Activated CD4-positive, alpha-beta T cell treated with anti-CD3 and anti-CD28 coated beads, Interleukin-2, amount 10 ng/mL, durations not matched to agents 24 days and 14 days (primary cell): ENCODE measurements at regions of chr19 and their contacts with region 1.

Region 1: GRCh38 chr19:21141787-21142464 is at the start of gene ZNF431:
- DNase-seq: peak; percentile 96
- H3K4me3 Mint-ChIP-seq: peak within 1 kb of the TSS; percentile 92
- H3K27ac Mint-ChIP-seq: peak within 1 kb of the TSS; percentile 96
- H3K4me1 Mint-ChIP-seq: peaks cover 22% of the 10 kb centered on the region
- H3K27me3 Mint-ChIP-seq: no peaks in the 10 kb centered on the region
- total RNA-seq, gene ZNF431: 14.2 and 14.8 TPM in 2 replicates

Region 2: DNA sequence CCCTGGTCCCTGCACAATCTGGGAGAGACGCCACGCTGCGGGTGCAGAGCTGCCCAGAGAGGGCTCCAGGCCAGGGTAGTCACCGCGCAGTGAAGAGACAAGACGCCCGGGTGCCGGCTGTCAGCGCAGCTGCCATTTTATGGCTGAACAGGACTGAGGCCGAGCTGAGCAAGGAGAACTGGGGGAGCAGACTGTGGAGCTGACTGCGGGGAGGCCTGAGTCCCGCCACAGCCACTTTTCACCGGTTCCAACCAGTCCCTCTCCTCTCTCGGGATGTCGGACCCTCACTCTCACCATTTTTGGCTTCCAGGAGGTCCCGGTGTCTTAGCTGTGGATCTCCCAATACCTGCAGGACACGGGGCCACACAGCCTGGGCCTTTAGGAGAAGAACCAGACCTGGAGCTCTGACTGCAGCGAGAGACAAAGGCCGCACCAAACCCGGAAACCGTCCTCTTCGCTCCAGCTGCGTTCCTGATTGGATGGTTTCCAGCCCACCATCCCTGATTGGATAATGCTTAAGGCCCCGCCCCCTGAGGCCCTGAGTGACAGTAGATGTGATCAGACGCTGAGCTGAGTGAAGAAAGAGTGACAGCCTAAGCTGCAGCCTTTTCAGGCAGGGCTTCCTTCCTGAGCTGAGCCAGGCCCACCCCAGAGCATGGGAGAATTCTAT is 480.6 kb before region 1 on chr19 and contains the start of gene ZNF626:
- intact Hi-C with region 1: loop called (anchors 10 kb)
- DNase-seq: peak; percentile 92
- H3K4me3 Mint-ChIP-seq: peak within 1 kb of the TSS; percentile 83
- H3K27ac Mint-ChIP-seq: peak within 1 kb of the TSS; percentile 84
- H3K4me1 Mint-ChIP-seq: no peaks in the 10 kb centered on the region
- H3K27me3 Mint-ChIP-seq: no peaks in the 10 kb centered on the region
- total RNA-seq, gene ZNF626: 1.7 and 2.7 TPM in 2 replicates

Region 3: GRCh38 chr19:20776083-20777076 is 365.5 kb before region 1 on chr19 and contains the start of gene ZNF66:
- intact Hi-C with region 1: loop called (anchors 1 kb)
- DNase-seq: peak; percentile 98
- H3K4me3 Mint-ChIP-seq: peak within 1 kb of the TSS; percentile 96
- H3K27ac Mint-ChIP-seq: peak within 1 kb of the TSS; percentile 95
- H3K4me1 Mint-ChIP-seq: peaks cover 4% of the 10 kb centered on the region
- H3K27me3 Mint-ChIP-seq: no peaks in the 10 kb centered on the region
- total RNA-seq, gene ZNF66: 7.9 and 10.7 TPM in 2 replicates

Region 4: DNA sequence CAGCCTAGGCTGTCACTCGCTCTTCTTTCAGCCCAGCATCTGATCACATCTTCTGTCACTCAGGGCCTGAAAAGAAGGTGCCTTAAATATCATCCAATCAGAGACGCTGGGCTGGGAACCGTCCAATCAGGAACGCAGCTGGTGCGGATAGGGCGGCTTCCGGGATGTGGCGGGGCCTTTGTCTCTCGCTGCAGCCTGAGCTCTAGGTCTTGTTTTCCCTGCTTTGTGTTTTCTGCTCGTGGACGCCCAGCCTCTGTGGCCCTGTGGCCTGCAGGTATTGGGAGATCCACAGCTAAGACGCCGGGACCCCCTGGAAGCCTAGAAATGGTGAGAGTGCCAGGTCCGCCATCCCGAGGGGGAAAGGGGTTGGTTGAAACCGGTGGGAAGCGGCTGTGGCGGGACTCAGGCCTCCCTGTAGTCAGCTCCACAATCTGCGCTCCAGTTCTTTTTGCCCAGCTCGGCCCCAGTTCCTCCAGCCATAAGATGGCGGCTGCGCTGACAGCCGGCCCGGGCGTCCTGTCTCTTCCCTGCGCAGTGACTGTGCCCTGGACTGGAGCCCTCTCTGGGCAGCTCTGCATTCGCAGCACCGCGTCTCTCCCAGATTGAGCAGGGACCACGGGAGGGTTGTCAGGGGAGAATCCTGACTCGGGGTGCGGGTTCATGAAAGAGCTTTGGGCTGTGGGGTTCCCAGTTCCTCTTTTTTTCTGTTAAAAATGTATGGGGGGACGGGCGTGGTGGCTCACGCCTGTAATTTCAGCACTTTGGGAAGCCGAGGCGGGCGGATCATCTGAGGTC is 218.7 kb before region 1 on chr19 and contains the start of gene ZNF85:
- intact Hi-C with region 1: loop called (anchors 5 kb)
- DNase-seq: peak; percentile 96
- H3K4me3 Mint-ChIP-seq: peak within 1 kb of the TSS; percentile 98
- H3K27ac Mint-ChIP-seq: peak within 1 kb of the TSS; percentile 98
- H3K4me1 Mint-ChIP-seq: peaks cover 9% of the 10 kb centered on the region
- H3K27me3 Mint-ChIP-seq: no peaks in the 10 kb centered on the region
- total RNA-seq, gene ZNF85: 9.9 and 11.9 TPM in 2 replicates

Region 5: DNA sequence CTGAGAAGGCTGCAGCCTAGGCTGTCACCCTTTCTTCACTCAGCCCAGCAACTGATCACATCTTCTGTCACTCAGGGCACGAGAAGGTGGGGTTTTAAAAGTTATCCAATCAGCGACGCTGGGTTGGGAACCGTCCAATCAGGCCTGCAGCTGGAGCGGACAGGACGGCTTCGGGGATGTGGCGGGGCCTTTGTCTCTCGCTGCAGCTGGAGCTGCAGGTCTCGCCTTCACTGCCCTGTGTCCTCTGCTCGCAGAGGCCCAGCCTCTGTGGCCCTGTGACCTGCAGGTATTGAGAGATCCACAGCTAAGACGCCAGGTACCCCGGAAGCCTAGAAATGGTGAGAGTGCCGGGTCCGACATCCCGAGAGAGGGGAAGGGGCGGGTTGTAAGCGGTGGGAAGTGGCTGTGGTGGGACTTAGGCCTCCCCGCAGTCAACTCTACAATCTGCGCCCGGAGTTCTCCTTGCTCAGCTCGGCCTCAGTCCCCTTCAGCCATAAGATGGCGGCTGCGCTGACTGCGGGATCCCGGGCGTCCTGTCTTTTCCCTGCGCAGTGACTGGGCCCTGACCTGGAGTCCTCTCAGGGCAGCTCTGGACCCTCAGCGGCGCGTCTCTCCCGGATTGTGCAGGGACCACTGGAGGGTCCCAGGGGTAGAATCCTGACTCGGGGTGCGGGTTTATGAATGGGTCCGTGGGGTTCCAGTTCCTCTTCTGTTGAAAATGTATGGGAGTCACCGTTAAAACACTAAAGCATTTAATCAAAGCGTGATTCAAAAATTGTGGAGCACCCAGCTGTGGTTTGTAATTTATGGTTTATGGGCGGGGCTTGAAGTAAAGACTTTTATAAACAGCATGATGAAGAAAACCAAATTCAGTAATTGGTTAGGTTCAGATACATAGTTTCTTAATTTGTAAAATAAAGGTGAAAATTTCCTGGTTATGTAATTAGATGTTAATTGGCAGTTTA is 59.6 kb before region 1 on chr19 and contains the start of gene ZNF714:
- intact Hi-C with region 1: loop called (anchors 1 kb)
- DNase-seq: peak; percentile 96
- H3K4me3 Mint-ChIP-seq: peak within 1 kb of the TSS; percentile 96
- H3K27ac Mint-ChIP-seq: peak within 1 kb of the TSS; percentile 99
- H3K4me1 Mint-ChIP-seq: peaks cover 26% of the 10 kb centered on the region
- H3K27me3 Mint-ChIP-seq: no peaks in the 10 kb centered on the region
- total RNA-seq, gene ZNF714: 18.8 and 20.4 TPM in 2 replicates

Region 6: DNA sequence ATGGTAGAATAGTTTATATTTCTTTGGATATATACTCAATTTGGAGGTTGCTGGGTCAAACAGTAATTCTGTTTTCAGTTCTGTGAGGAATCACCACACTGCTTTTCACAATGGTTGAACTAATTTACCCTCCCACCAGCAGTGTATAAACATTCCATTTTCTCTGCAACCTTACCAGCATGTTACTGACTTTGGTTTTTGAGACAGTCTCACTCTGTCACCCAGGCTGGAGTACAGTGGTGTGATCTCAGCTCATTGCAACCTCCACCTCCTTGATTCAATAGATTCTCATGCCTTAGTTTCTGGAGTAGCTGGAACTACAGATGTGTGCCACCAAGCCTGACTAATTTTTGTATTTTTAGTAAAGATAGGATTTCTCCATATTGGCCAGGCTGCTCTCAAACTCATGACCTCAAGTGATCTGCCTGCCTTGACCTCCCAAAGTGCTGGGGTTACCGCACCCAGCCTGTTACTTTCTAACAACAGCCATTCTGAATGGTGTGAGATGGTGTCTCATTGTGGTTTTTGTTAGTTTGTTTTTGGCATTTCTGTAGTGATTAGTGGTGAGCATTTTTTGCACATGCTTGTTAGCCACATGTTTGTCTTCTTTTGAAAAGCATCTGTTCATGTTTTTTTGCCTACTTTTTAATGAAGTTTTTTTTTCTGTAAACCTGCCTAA is 47.4 kb before region 1 on chr19:
- intact Hi-C with region 1: no loop called
- DNase-seq: no peak
- H3K4me3 Mint-ChIP-seq: no peak overlapping the region
- H3K27ac Mint-ChIP-seq: no peak overlapping the region
- H3K4me1 Mint-ChIP-seq: no peaks in the 10 kb centered on the region
- H3K27me3 Mint-ChIP-seq: no peaks in the 10 kb centered on the region

Region 7: GRCh38 chr19:21117041-21117843 is 24.7 kb before region 1 on chr19:
- intact Hi-C with region 1: no loop called
- DNase-seq: peak; percentile 4
- H3K4me3 Mint-ChIP-seq: no peak overlapping the region
- H3K27ac Mint-ChIP-seq: no peak overlapping the region
- H3K4me1 Mint-ChIP-seq: no peaks in the 10 kb centered on the region
- H3K27me3 Mint-ChIP-seq: no peaks in the 10 kb centered on the region

Region 8: GRCh38 chr19:21158523-21159135 is 16.7 kb after region 1 on chr19:
- intact Hi-C with region 1: no loop called
- DNase-seq: peak; percentile 20
- H3K4me3 Mint-ChIP-seq: no peak overlapping the region
- H3K27ac Mint-ChIP-seq: no peak overlapping the region
- H3K4me1 Mint-ChIP-seq: no peaks in the 10 kb centered on the region
- H3K27me3 Mint-ChIP-seq: no peaks in the 10 kb centered on the region

Region 9: DNA sequence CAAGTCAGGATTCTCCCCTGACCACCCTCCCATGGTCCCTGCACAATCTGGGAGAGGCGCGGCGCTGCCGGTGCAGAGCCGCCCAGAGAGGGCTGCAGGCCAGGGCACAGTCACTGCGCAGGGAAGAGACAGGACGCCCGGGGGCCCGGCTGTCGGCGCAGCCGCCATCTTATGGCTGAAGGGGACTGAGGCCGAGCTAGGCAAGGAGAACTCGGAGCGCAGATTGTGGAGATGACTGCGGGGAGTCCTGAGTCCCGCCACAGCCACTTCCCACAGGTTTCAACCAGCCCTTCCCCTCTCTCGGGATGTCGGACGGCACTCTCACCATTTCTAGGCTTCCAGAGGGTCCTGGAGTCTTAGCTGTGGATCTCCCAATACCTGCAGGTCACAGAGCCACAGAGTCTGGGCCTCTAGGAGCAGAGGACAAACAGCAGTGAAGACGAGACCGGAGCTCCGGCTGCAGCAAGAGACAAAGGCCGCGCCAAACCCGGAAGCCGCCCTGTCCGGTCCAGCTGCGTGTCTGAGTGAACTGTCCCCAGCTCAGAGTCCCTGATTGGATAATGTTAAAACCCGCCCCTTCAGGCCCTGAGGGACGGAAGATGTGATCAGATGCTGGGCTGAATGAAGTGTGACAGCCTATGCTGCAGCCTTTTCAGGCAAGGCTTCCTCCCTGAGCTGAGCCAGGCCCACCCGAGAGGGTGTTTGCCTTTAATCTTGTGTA is 187.1 kb after region 1 on chr19 and contains the start of gene ZNF708:
- intact Hi-C with region 1: loop called (anchors 5 kb)
- DNase-seq: peak; percentile 94
- H3K4me3 Mint-ChIP-seq: peak within 1 kb of the TSS; percentile 94
- H3K27ac Mint-ChIP-seq: peak within 1 kb of the TSS; percentile 100
- H3K4me1 Mint-ChIP-seq: peaks cover 17% of the 10 kb centered on the region
- H3K27me3 Mint-ChIP-seq: no peaks in the 10 kb centered on the region
- total RNA-seq, gene ZNF708: 10.1 TPM in 2 replicates

Region 10: GRCh38 chr19:21767065-21767800 is 625.3 kb after region 1 on chr19 and contains the start of gene ZNF100:
- intact Hi-C with region 1: loop called (anchors 10 kb)
- DNase-seq: peak; percentile 95
- H3K4me3 Mint-ChIP-seq: peak within 1 kb of the TSS; percentile 94
- H3K27ac Mint-ChIP-seq: peak within 1 kb of the TSS; percentile 83
- H3K4me1 Mint-ChIP-seq: peaks cover 17% of the 10 kb centered on the region
- H3K27me3 Mint-ChIP-seq: no peaks in the 10 kb centered on the region
- total RNA-seq, gene ZNF100: 20.8 and 24.1 TPM in 2 replicates